ENCODE measurements at regions of chr4 and their contacts with region 1.

Region 1: DNA sequence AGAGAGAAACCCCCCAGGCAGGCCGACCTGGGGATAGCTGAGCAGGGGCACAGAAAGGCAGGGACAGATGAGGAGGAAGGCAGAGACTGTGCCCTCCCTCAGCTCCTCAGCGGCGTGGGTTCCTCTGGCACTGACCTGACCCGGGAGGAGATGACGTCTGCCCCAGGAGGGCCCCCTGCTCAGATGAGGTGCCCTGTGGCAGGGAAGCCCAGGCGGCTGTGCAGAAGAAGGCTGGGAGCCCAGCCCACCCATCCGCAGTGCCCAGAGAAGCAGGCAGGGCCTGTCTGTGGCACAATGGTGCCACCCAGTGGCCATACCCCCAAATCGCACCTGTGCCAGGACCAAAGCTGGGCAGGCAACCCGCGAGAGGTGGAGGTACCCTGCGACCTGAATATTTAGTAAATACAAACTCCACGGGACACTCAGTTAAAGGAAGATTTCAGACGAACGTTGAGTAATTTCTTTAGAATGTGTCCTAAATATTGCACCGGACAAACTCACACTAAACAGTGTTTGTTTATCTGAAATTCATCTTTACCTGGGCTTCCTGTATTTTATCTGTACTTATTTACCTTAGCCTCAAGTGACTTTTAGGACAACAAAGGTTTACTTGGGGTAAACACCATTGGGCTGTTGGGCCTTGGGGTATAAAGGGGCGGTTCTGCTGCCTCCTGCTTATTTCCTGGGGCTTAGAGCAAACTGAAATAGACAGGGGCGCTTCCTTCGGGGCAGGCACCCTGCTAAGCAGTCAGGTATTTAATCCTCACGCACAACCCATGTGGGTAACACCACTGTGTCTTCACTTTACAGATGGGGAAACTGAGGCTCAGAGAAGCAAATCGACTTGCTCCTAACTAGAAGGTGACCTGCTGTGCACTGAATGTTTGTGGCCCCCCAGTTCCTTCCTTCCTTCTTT is 46.5 kb upstream of the HMX1 start:
- DNase-seq: peak; percentile 38
- ATAC-seq: peak; percentile 97
- H3K4me3 ChIP-seq: no peak overlapping the region; a peak in 1 of 4 replicates
- H3K27ac ChIP-seq: no peak overlapping the region
- H3K4me1 ChIP-seq: 0 out of 4 replicates have a peak, but pooled peaks cover 0 to 2% of the 10 kb centered on the region in 2 experiments
- H3K27me3 ChIP-seq: no peaks in the 10 kb centered on the region; the same call in 1 of the 2 replicates
- CTCF ChIP-seq: peak; percentile 83 to 95 (median 85)
- POLR2A ChIP-seq: no peak
- RAD21 ChIP-seq: peak; percentile 95

Region 2: GRCh38 chr4:8594097-8595038 is 323.8 kb before region 1 on chr4:
- CTCF ChIA-PET with region 1: interaction called, 3 read pairs
- POLR2A ChIA-PET with region 1: no interaction called
- RAD21 ChIA-PET with region 1: no interaction called
- intact Hi-C with region 1: loop called (anchors 5 kb)
- DNase-seq: peak; percentile 64
- ATAC-seq: peak; percentile 83
- H3K4me3 ChIP-seq: no peak overlapping the region
- H3K27ac ChIP-seq: no peak overlapping the region
- H3K4me1 ChIP-seq: peaks cover 3 to 10% of the 10 kb centered on the region in 2 experiments; a peak in 3 of 4 replicates
- H3K27me3 ChIP-seq: 0 out of 2 replicates have a peak, but pooled peaks cover 5% of the 10 kb centered on the region
- CTCF ChIP-seq: peak; percentile 67 to 82 (median 78)
- POLR2A ChIP-seq: no peak
- RAD21 ChIP-seq: peak; percentile 92

Region 3: DNA sequence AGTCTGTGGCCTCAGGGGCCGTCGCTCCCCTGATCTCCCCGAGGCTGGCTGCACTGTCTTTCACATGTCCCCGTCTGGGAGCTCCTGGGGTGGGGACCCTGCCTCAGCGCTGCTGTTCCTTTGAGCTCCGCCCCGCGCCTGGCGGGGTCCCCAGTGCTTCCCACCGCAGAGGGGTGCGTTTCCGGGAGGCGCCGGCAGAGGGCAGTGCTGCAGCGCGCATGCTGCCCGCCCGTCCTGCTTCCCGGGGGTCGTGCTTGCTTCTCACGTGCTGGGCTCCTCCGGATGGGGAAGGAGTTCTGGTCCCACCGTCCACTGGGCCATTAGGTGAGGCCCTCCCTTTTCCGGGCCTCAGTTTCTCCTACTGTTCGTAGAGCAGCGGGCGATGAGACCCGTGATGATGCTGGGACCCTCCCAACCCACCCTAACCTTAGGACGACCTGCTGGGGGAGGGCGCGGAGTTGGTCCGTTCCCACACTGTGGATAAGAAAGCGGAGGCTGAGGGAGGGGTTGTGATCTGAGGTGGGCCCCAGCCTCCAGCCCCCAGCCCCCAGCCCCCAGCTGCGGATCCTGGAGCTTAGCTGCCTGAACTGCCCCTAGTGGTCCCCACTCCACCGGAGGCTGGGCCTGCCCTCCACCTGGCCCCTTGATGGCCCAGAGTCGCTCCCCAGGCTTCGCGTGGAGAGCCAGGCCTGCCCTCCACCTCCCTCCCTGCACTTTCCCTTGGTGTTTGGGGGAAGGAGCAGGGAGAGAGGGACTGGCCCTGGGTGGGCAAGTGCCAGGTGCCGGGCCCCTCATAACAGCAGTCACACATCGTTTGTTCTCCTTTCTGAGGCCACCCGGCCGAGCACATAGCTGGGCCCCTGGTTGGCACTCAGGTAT is 310.3 kb before region 1 on chr4:
- CTCF ChIA-PET with region 1: interaction called, 15 read pairs
- POLR2A ChIA-PET with region 1: no interaction called
- RAD21 ChIA-PET with region 1: interaction called, 3 read pairs
- intact Hi-C with region 1: no loop called
- DNase-seq: no peak
- ATAC-seq: peak; percentile 67
- H3K4me3 ChIP-seq: no peak overlapping the region
- H3K27ac ChIP-seq: no peak overlapping the region
- H3K4me1 ChIP-seq: no peaks in the 10 kb centered on the region
- H3K27me3 ChIP-seq: 0 out of 2 replicates have a peak, but pooled peaks cover 4% of the 10 kb centered on the region
- CTCF ChIP-seq: peak; percentile 62 to 95 (median 92); a peak in 5 of 6 replicates
- POLR2A ChIP-seq: no peak
- RAD21 ChIP-seq: peak; percentile 79

Region 4: DNA sequence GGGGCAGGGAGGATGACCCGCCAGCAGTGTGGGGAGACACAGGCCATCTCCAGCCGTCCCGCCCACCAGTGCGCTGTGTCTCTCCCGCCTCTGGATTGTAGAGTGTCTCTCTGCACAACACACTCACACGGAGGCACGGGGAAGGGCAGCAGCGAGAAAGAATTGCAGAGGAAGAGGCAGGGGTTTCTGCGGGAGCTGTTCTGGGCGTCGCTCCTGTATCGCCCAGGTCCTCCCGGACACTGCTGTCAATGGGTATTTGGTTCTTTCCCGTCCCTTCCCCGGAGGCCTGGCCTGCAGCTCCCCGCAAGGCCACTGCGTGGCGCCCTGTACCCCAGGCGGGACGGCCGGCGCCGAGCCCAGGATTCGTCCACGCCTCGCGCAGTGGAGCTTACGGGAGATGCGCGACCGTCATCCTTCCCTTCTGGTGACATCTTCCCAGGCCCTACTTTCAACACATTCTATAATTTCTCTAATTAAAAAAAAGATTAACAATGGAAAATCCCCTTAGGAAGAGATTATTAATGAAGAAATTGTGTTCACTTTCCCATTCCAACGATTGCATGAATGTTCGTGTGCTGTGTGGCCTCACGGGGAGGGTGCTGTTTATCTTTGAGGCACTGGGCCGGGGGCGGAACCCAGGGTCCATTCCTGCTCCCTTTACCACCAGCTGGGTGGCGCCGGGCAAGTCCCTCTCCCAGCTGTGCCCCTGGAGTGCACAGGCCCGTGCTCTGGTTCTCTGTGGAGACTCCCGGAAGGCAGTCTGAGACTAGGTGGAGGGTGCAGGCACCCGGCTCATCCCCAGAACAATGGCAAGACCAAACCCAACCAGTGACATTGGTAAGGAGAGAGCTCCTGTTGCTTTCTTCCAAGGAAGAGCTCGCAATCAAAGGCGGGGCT is 229.8 kb before region 1 on chr4:
- CTCF ChIA-PET with region 1: interaction called, 23 read pairs
- POLR2A ChIA-PET with region 1: no interaction called
- RAD21 ChIA-PET with region 1: no interaction called
- intact Hi-C with region 1: loop called (anchors 1 kb)
- DNase-seq: peak; percentile 19
- ATAC-seq: peak; percentile 97
- H3K4me3 ChIP-seq: no peak overlapping the region
- H3K27ac ChIP-seq: no peak overlapping the region
- H3K4me1 ChIP-seq: peaks cover 0 to 3% of the 10 kb centered on the region in 2 experiments; a peak in 1 of 4 replicates
- H3K27me3 ChIP-seq: peaks cover 20% of the 10 kb centered on the region; the same call in 1 of the 2 replicates
- CTCF ChIP-seq: peak; percentile 78 to 98 (median 86); a peak in 5 of 6 replicates
- POLR2A ChIP-seq: no peak
- RAD21 ChIP-seq: peak; percentile 81

Region 5: GRCh38 chr4:9762823-9763475 is 844.8 kb after region 1 on chr4:
- CTCF ChIA-PET with region 1: no interaction called
- POLR2A ChIA-PET with region 1: no interaction called
- RAD21 ChIA-PET with region 1: no interaction called
- intact Hi-C with region 1: no loop called
- DNase-seq: peak; percentile 70
- ATAC-seq: peak; percentile 72
- H3K4me3 ChIP-seq: no peak overlapping the region
- H3K27ac ChIP-seq: no peak overlapping the region
- H3K4me1 ChIP-seq: no peaks in the 10 kb centered on the region
- H3K27me3 ChIP-seq: 0 out of 2 replicates have a peak, but pooled peaks cover 3% of the 10 kb centered on the region
- CTCF ChIP-seq: peak; percentile 66 to 89 (median 75)
- POLR2A ChIP-seq: no peak
- RAD21 ChIP-seq: peak; percentile 91

Measured in HCT116 (cell line).